HAP-1 (cell line): ENCODE measurements at regions of chr2 and their contacts with region 1.

Region 1: DNA sequence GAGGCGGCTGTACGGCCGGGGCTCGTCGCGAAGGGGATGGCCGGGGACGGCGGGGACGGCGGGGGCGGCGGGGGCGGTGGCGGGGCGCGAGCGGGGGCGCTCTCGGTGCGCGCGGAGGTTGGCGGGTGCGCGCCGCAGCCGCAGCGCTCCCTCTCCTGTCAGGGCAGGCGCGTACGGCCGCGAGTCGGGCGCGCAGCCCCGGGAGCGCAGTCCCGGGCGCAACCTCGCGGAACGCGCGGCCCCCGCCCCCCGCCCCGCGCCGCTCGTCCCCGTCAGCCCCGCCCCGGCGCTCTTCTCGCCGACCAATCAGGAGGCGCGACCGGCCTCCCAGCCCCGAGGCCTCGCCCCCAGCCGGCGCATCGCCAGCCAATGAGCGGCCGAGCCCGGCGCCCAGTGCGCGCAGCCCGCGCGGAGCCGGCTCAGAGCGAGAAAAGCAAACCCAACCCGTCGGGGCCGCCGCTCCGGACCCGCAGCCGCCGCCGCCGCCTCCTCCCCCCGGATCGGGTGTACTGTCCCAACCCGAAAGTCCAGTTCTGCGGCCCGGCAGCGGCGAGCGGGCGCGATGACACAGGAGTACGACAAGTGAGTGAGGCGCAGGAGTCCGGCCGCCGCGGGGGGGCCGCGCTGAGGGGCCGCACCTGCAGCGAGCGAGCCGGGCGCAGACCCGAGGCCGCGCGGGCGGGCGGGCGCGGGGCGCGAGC is at the start of gene GRHL1:
- DNase-seq: peak; percentile 89 to 94
- H3K4me3 ChIP-seq: peak within 1 kb of the TSS; percentile 63
- H3K4me1 ChIP-seq: peaks cover 23% of the 10 kb centered on the region
- H3K27me3 ChIP-seq: no peaks in the 10 kb centered on the region

Region 2: GRCh38 chr2:9843229-9844035 is 108.0 kb before region 1 on chr2 and contains the start of gene TAF1B:
- in situ Hi-C with region 1: loop called (anchors 25 kb)
- DNase-seq: peak; percentile 95 to 96
- H3K4me3 ChIP-seq: peak within 1 kb of the TSS; percentile 57
- H3K4me1 ChIP-seq: peaks cover 11% of the 10 kb centered on the region
- H3K27me3 ChIP-seq: no peaks in the 10 kb centered on the region